Tibial artery (tissue), 4 donors: ENCODE measurements at regions of chr11 and their contacts with region 1.

Region 1: DNA sequence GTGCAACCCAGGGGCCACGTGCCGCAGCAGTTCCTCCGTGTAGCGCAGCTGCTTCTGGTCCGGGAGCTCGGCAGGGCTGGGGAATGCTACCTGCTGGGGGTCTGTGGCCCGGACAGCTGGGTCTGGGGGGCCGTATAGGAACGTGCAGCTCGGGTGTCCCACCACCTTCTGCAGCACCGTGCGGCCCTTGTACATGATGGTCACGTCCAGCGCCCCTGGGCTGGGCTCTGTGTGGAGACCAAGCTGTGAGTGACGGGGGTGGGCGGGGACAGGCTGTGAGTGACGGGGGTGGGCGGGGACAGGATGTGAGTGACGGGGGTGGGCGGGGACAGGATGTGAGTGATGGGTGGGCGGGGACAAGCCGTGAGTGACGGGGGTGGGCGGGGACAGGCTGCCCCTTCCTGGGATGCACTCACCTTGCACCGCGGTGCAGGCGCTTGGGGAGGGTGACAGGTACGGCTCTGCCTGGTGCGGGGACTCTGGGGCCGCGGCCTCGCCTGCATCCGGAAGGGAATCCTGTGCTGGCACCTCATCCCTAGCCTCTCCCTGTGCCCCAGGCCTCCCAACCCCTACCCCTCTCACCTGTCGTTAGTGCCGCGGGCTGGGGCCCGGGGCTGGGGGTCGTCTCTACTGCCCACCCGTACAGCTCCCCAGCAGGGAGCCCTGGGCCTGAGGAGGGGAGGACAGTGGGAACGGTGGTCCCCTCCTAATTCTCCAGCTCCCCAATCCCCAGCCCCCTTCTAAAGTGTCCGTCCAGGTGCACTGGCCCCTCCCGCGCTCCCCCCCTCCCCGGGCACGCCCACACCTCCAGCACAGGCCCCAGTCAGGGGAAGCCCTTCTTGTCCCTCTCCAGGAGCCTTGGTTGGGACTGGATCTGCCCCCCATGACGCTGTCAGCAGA is 2.1 kb downstream of the IRF7 start:
- DNase-seq: peak; percentile 72 to 83
- H3K4me3 ChIP-seq: no peak overlapping the region
- H3K27ac ChIP-seq: peak overlapping the region; percentile 86 to 90
- H3K4me1 ChIP-seq: peaks cover 0 to 28% (median 19%) of the 10 kb centered on the region in 4 donors
- H3K27me3 ChIP-seq: no peaks in the 10 kb centered on the region
- CTCF ChIP-seq: no peak

Region 2: DNA sequence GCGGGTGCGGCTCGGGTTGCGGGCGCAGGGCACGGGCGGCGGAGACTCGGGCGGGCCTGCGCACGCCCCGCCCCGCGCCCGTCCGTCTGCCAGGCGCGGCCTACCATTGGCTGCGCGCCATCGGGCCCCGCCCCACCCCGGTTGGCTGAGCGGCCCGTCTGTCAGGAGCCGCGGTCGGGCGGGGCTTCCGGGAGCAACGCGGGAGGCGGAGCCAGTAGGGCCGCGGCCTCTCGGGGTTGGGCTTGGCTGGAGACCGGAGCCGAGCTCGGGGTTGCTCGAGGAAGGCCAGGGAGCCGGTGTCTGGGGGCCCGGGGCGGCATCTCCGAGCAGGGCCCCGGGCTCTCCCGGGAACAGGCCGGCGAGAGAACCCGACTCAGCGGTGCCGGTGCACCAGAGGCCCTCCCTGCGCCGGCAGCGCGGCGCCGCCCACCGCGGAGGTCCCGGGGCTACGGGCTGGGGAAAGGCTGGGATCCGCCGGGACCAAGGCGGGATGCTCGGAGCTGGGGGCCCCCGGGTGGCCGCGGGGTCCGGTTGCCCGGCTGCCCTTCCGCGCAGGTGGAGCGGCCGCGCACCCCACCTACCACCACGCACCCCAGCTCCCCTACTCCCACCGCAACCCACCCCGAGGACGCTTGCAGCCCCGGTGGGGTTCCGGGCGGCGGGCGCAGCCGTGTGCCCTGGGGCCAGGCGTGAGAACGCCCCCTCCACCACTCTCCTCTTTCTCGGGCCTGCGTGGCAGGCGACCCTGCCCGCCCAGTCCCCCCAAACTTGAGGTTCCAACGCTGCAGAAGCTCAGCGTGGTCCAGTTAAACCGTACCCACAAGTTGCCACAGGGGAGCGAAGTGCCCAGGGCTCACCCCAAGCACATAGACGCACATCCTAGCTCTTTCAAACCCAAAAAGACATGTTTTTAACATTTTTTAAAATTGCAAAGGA is 77.8 kb before region 1 on chr11 and contains the start of gene HRAS:
- intact Hi-C with region 1: loop called (anchors 2 kb)
- DNase-seq: peak; percentile 91 to 97
- H3K4me3 ChIP-seq: peak within 1 kb of the TSS; percentile 81 to 98
- H3K27ac ChIP-seq: peak within 1 kb of the TSS; percentile 76 to 78
- H3K4me1 ChIP-seq: peaks cover 3 to 44% (median 34%) of the 10 kb centered on the region in 4 donors
- H3K27me3 ChIP-seq: peaks cover 0 to 11% of the 10 kb centered on the region in 2 donors
- CTCF ChIP-seq: no peak

Region 3: GRCh38 chr11:575996-576768 is 37.4 kb before region 1 on chr11 and contains the start of gene PHRF1:
- intact Hi-C with region 1: loop called (anchors 5 kb)
- DNase-seq: peak; percentile 95 to 98
- H3K4me3 ChIP-seq: peak within 1 kb of the TSS; percentile 78 to 89
- H3K27ac ChIP-seq: peak within 1 kb of the TSS; percentile 83 to 87
- H3K4me1 ChIP-seq: peaks cover 0 to 50% (median 42%) of the 10 kb centered on the region in 4 donors
- H3K27me3 ChIP-seq: no peaks in the 10 kb centered on the region
- CTCF ChIP-seq: peak in 1 of 2 experiments; percentile 31